HepG2 (cell line): ENCODE measurements at regions of chr3 and their contacts with region 1.

Region 1: DNA sequence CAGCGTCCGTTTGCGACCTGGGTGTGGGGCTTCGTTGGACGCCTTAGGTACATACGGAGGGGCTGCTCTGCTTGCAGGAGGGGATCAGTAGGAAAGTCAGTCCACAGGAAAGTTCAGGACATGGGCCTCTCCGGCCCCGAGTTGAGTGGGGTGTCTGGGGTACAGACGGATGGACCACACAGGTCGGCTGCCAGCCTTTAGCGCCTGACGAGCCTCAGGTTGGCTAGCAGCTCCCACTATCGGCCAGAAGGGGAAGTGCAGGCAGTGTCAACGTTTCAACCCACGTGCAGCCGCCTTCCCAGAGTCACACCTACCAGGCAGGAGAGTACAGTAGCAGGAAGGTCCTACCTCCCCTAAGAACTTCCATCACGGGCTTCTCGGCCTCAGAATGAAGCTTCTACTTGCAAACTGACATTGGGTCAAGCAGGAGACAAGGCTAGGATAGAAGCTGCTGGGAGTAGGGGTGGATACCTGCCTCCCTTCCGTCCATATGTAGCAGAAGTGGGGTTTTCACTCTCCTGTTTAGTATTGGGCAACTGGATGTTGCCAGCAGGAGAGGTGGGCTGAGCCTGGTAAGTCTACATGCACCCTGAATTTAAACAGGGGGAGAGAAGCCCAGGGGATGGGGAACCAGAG is 1.8 kb upstream of the SCN5A start:
- DNase-seq: peak; percentile 45
- ATAC-seq: peak; percentile 71
- H3K4me3 ChIP-seq: no peak overlapping the region
- H3K27ac ChIP-seq: no peak overlapping the region
- H3K4me1 ChIP-seq: peaks cover 13% of the 10 kb centered on the region
- H3K27me3 ChIP-seq: peaks cover 2 to 39% of the 10 kb centered on the region in 2 experiments
- CTCF ChIP-seq: peak; percentile 91
- EP300 ChIP-seq: no peak
- POLR2A ChIP-seq: no peak
- RAD21 ChIP-seq: peak; percentile 54; the same call in 1 of the 2 replicates

Region 2: DNA sequence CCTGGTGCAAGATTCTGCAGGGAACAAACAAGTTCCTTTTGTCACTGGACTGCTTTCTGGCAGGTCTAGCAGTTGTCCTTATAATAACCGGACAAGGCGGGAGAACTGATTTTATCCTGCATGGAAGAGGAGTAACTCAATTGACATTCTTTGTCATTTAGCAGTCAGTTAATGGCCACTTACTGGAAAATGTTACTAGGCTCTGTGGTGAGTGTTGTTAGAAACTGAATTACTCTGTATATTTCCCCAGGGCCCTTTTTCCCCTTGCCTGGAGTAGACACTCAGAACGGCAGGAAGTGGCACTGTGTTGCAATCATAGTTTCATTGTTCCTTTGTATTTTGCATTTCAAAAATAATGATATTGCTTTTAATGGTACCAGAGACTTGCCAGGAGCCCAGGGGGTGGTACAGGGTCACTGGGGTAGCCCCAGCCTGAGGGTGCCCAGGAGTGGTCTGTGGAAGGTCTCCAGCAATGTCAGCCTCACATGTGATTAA is 1158.2 kb before region 1 on chr3:
- CTCF ChIA-PET with region 1: no interaction called
- POLR2A ChIA-PET with region 1: no interaction called
- in situ Hi-C with region 1: no loop called
- intact Hi-C with region 1: loop called (anchors 10 kb)
- DNase-seq: no peak
- ATAC-seq: no peak
- H3K4me3 ChIP-seq: no peak overlapping the region
- H3K27ac ChIP-seq: no peak overlapping the region
- H3K4me1 ChIP-seq: no peaks in the 10 kb centered on the region
- H3K27me3 ChIP-seq: peaks cover 0 to 19% of the 10 kb centered on the region in 2 experiments; a peak in 3 of 5 replicates
- CTCF ChIP-seq: no peak
- EP300 ChIP-seq: no peak
- POLR2A ChIP-seq: no peak
- RAD21 ChIP-seq: no peak

Region 3: GRCh38 chr3:38521391-38521987 is 129.8 kb before region 1 on chr3:
- CTCF ChIA-PET with region 1: interaction called, 15 read pairs
- POLR2A ChIA-PET with region 1: no interaction called
- in situ Hi-C with region 1: no loop called
- intact Hi-C with region 1: loop called (anchors 1 kb)
- DNase-seq: peak; percentile 56
- ATAC-seq: peak; percentile 68
- H3K4me3 ChIP-seq: no peak overlapping the region
- H3K27ac ChIP-seq: no peak overlapping the region
- H3K4me1 ChIP-seq: no peaks in the 10 kb centered on the region
- H3K27me3 ChIP-seq: no peaks in the 10 kb centered on the region
- CTCF ChIP-seq: peak; percentile 87
- EP300 ChIP-seq: no peak
- POLR2A ChIP-seq: no peak
- RAD21 ChIP-seq: peak; percentile 64

Region 4: DNA sequence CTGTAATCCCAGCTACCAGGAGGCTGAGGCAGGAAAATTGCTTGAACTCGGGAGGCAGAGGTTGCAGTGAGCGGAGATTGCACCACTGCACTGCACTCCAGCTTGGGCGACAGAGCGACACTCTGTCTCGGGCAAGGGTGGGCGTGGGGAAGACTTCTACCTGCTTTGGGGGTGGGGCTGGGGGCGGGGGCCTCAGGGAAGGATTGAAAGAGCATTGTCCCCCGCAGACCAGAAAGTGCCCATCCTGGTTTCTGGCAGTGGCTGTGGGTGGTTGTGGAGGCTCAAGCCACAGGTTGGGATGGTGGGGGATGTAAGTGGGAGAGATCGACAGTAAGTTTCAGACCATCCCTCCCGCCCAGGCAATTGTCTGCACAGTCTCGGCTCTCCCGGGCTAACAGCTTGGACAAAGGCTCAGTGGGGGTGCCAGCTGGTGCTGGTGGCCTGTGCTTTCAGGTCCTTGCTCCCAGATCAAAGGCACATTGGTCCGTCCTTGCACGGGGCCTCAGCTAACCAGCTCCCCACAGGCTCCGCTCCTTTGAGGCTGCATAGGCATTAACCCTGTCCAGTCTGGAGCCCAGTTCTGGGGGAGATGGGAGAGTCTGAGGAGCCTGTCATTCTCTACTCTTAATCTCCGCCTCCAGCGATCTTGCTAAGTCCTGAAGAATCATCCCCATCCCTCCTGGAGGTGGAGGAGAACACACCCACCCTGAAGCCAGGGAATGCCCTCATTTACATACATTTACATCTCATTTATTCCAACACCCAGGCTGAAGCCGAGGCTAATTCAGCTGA is 10.4 kb before region 1 on chr3:
- CTCF ChIA-PET with region 1: no interaction called
- POLR2A ChIA-PET with region 1: no interaction called
- in situ Hi-C with region 1: no loop called
- intact Hi-C with region 1: no loop called
- DNase-seq: no peak
- ATAC-seq: no peak; the same call in 2 of the 3 replicates
- H3K4me3 ChIP-seq: no peak overlapping the region
- H3K27ac ChIP-seq: no peak overlapping the region
- H3K4me1 ChIP-seq: no peaks in the 10 kb centered on the region
- H3K27me3 ChIP-seq: peaks cover 8 to 75% of the 10 kb centered on the region in 2 experiments; a peak in 4 of 5 replicates
- CTCF ChIP-seq: no peak
- EP300 ChIP-seq: no peak
- POLR2A ChIP-seq: no peak
- RAD21 ChIP-seq: no peak

Region 5: GRCh38 chr3:38662544-38662943 is 11.3 kb after region 1 on chr3:
- CTCF ChIA-PET with region 1: interaction called, 4 read pairs
- POLR2A ChIA-PET with region 1: no interaction called
- in situ Hi-C with region 1: no loop called
- intact Hi-C with region 1: loop called (anchors 1 kb)
- DNase-seq: peak; percentile 52
- ATAC-seq: peak; percentile 90
- H3K4me3 ChIP-seq: no peak overlapping the region
- H3K27ac ChIP-seq: no peak overlapping the region
- H3K4me1 ChIP-seq: no peaks in the 10 kb centered on the region; the same call in 1 of the 2 replicates
- H3K27me3 ChIP-seq: peaks cover 0 to 11% of the 10 kb centered on the region in 2 experiments; a peak in 2 of 5 replicates
- CTCF ChIP-seq: peak; percentile 78
- EP300 ChIP-seq: no peak
- POLR2A ChIP-seq: no peak
- RAD21 ChIP-seq: peak; percentile 25; the same call in 1 of the 2 replicates

Region 6: GRCh38 chr3:38758557-38758956 is 107.3 kb after region 1 on chr3:
- CTCF ChIA-PET with region 1: no interaction called
- POLR2A ChIA-PET with region 1: no interaction called
- in situ Hi-C with region 1: no loop called
- intact Hi-C with region 1: no loop called
- DNase-seq: no peak
- ATAC-seq: no peak
- H3K4me3 ChIP-seq: no peak overlapping the region
- H3K27ac ChIP-seq: no peak overlapping the region
- H3K4me1 ChIP-seq: no peaks in the 10 kb centered on the region
- H3K27me3 ChIP-seq: no peaks in the 10 kb centered on the region
- CTCF ChIP-seq: no peak
- EP300 ChIP-seq: no peak
- POLR2A ChIP-seq: no peak
- RAD21 ChIP-seq: no peak

Region 7: GRCh38 chr3:38843898-38844297 is 192.6 kb after region 1 on chr3:
- CTCF ChIA-PET with region 1: no interaction called
- POLR2A ChIA-PET with region 1: no interaction called
- in situ Hi-C with region 1: loop called (anchors 10 kb)
- intact Hi-C with region 1: loop called (anchors 5 kb)
- DNase-seq: peak; percentile 34
- ATAC-seq: peak; percentile 79
- H3K4me3 ChIP-seq: no peak overlapping the region
- H3K27ac ChIP-seq: no peak overlapping the region
- H3K4me1 ChIP-seq: no peaks in the 10 kb centered on the region
- H3K27me3 ChIP-seq: no peaks in the 10 kb centered on the region; a peak in 1 of 5 replicates
- CTCF ChIP-seq: peak; percentile 63
- EP300 ChIP-seq: no peak
- POLR2A ChIP-seq: no peak
- RAD21 ChIP-seq: peak; percentile 32; the same call in 1 of the 2 replicates

Region 8: DNA sequence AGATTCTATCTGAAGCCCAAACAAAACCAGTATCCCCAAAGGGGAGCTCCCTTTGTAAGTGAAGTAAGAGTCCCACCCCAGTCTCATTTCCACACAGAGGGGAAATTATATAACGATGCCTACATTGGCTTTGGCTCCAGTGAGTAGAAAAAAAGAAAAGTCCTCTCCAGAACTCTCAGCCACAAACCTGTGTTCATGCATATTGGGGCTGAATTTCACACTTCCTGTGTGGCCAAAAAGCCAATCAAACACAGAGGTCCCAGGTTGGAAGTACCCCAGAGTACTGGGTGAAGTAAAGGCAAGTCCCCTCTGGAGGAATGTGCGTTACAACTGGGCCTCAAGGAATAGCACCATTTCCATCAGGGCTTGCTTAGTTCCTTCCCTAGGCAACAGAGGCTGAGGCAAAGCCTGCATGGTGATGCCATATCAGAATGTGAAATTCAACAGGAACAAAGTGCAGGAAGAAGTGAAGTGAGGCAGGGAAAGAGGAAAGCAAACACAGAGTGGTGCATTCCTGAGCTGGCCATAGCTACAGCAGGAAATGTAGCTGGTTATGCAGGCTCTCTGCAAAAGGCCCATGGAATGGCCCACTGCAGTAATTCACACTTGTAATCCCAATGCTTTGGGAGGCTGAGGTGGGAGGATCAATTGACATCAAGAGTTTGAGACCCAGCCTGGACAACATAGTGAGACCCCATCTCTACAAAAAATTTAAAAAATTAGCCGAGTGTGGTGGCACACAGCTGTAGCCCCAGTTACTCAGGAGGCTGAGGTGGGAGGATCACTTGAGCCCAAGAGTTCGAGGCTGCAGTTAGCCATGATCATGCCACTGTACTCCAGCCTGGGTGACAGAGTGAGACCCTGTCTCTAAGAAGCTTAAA is 645.2 kb after region 1 on chr3:
- CTCF ChIA-PET with region 1: no interaction called
- POLR2A ChIA-PET with region 1: no interaction called
- in situ Hi-C with region 1: no loop called
- intact Hi-C with region 1: no loop called
- DNase-seq: peak; percentile 32
- ATAC-seq: peak; percentile 70
- H3K4me3 ChIP-seq: no peak overlapping the region
- H3K27ac ChIP-seq: no peak overlapping the region
- H3K4me1 ChIP-seq: peaks cover 48% of the 10 kb centered on the region
- H3K27me3 ChIP-seq: peaks cover 0 to 1% of the 10 kb centered on the region in 2 experiments; a peak in 2 of 5 replicates
- CTCF ChIP-seq: no peak
- EP300 ChIP-seq: no peak
- POLR2A ChIP-seq: no peak
- RAD21 ChIP-seq: no peak